Activated CD4-positive, alpha-beta T cell treated with anti-CD3 and anti-CD28 coated beads, Interleukin-2, amount 10 ng/mL, durations not matched to agents 24 days and 14 days (primary cell): ENCODE measurements at regions of chr21 and their contacts with region 1.

Region 1: DNA sequence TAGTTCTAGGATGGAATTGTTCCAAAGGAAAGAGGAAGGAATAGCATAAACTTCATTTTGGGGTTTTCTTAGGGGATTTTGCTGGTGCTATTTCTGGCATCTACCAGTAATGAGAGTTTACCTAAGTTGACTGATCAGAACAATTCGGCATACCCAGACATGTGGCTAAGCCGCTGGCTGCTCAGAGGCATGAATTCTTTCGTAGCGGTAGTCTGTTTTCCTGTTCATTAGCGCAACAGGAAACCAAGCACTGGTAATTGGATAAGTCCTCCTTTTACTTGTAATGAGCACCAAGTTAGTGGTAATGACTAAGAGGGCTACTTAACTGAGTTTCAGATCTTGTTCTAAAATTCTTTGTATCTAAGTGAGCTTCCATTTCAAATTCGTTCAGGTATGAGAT is 38.6 kb downstream of the C21orf91 start:
- DNase-seq: peak; percentile 78
- H3K4me3 Mint-ChIP-seq: peak overlapping the region; percentile 70
- H3K27ac Mint-ChIP-seq: peak overlapping the region; percentile 75
- H3K4me1 Mint-ChIP-seq: peaks cover 83% of the 10 kb centered on the region
- H3K27me3 Mint-ChIP-seq: no peaks in the 10 kb centered on the region

Region 2: DNA sequence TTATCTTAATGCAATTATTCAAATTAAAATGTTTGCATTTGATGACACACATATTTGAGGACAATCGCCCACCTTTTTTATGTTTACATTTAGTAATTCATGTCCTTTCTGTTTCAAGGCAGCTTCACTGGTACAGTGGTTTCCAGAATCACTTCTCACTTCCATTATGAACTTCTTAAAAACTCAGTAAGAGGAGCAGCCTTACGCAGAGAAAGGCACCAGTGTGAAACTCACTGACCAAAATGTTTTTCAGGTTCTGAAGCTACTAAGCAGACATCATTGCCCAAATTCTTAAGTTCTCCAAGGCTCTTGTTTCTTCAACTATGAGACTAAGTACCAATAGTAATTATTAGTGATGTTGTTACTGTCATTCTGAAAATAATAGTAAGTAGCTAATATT is 620.8 kb before region 1 on chr21:
- intact Hi-C with region 1: no loop called
- DNase-seq: no peak
- H3K4me3 Mint-ChIP-seq: no peak overlapping the region
- H3K27ac Mint-ChIP-seq: no peak overlapping the region
- H3K4me1 Mint-ChIP-seq: no peaks in the 10 kb centered on the region
- H3K27me3 Mint-ChIP-seq: no peaks in the 10 kb centered on the region

Region 3: GRCh38 chr21:17512253-17513213 is 268.0 kb before region 1 on chr21 and contains the start of gene CXADR:
- intact Hi-C with region 1: loop called (anchors 10 kb)
- DNase-seq: peak; percentile 92
- H3K4me3 Mint-ChIP-seq: peak within 1 kb of the TSS; percentile 87
- H3K27ac Mint-ChIP-seq: peak within 1 kb of the TSS; percentile 70
- H3K4me1 Mint-ChIP-seq: peaks cover 15% of the 10 kb centered on the region
- H3K27me3 Mint-ChIP-seq: peaks cover 53% of the 10 kb centered on the region
- total RNA-seq, gene CXADR: 0.16 and 0.33 TPM in 2 replicates

Region 4: DNA sequence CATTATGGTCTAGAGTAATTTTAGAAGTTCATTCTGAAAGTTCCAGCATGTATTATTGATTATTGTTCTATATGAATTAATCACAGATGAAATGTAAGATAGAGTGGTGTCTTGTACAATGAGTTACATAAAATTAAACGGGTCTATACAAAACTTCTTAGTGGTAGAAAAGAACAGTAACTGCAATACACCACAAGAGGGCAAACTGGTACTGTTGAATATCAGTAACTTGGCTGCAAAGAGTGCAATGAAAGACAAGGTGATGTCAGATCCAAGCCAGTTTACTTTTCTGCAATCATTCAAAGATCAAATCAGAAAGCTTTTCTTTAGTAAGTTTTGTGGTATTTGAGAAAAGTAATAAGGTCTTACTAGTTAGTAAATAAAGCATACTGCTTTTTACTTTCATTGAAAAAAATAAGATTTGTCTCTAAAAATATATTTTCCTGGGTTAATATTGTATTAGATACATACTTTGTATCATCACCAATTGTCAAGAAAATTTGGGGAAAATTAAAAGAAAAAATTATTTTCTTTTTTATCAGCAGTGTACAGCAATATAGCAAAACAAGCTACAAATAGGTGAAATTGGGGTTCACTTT is 101.4 kb before region 1 on chr21:
- intact Hi-C with region 1: no loop called
- DNase-seq: peak; percentile 78
- H3K4me3 Mint-ChIP-seq: no peak overlapping the region
- H3K27ac Mint-ChIP-seq: no peak overlapping the region
- H3K4me1 Mint-ChIP-seq: no peaks in the 10 kb centered on the region
- H3K27me3 Mint-ChIP-seq: peaks cover 4% of the 10 kb centered on the region

Region 5: DNA sequence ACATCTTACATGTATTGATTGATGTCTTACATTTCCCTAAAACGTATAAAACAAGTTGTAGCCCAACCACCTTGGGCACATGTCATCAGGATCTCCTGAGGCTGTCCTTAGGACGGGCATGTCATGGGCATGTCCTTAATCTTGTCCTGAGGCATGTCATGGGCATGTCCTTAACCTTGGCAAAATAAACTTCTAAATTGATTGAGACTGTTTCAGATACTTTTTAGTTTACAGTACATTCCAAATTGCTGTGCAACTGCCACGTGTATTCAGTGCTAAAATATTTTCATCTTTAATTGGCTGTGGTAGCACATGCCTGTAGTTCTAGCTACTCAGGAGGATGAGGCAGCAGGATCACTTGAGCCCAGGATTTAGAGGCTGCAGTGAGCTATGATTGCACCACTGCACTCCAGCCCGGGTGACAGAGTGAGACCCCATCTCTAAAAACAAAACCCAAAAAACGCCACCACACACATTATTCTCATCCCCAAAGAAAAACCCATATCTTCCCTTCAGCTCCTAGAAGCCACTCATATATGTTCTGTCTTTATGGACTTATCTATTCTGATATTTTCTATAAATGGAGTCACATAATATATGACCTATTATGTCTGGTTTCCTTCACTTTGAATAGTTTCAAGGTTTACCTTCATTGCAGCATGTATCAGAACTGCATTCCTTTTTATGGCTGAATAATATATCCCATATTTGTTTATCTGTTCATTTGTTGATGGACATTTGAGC is 71.8 kb before region 1 on chr21:
- intact Hi-C with region 1: loop called (anchors 2 kb)
- DNase-seq: no peak
- H3K4me3 Mint-ChIP-seq: no peak overlapping the region
- H3K27ac Mint-ChIP-seq: no peak overlapping the region
- H3K4me1 Mint-ChIP-seq: peaks cover 27% of the 10 kb centered on the region
- H3K27me3 Mint-ChIP-seq: peaks cover 6% of the 10 kb centered on the region

Region 6: GRCh38 chr21:17758657-17759056 is 21.9 kb before region 1 on chr21:
- intact Hi-C with region 1: no loop called
- DNase-seq: no peak
- H3K4me3 Mint-ChIP-seq: no peak overlapping the region
- H3K27ac Mint-ChIP-seq: no peak overlapping the region
- H3K4me1 Mint-ChIP-seq: no peaks in the 10 kb centered on the region
- H3K27me3 Mint-ChIP-seq: no peaks in the 10 kb centered on the region

Region 7: GRCh38 chr21:17768840-17769446 is 11.6 kb before region 1 on chr21:
- intact Hi-C with region 1: no loop called
- DNase-seq: no peak
- H3K4me3 Mint-ChIP-seq: no peak overlapping the region
- H3K27ac Mint-ChIP-seq: no peak overlapping the region
- H3K4me1 Mint-ChIP-seq: peaks cover 4% of the 10 kb centered on the region
- H3K27me3 Mint-ChIP-seq: no peaks in the 10 kb centered on the region

Region 8: DNA sequence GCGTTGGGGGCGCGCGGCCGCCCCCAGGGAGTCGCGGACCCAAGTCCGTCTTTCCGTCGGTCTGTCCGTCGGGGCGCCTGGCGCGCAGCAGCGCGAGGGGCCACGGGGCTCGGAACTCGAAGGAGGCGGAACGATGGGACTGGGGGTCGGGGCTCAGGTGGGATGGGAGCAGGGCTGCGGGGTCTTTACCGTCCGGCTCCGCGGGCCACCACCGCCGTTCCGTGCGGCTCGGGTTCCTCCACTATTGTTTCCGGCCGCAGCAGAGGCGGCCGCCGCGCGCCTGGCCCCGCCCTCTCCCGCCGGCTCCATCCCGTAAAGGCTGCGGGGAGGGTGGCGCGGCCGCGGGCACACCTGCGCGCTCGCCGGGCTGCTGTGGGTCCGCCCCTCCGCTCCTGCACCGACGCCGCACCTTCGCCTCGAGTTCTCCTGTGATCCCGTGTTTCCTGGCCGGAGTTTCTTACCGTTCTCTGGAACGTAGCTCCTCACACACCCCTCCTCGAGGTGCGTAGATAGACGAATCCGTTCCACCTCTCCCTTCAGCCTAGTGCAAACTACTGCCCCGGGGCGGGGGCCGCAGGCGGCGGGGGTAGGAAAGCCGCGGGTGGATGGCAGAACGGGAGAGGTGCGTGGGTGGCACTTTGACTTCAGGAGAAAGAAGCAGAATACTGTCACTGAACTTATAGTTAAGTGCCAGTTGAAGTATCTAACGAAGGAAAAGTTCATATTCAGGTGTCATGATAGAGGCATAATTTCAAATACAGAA is 38.8 kb after region 1 on chr21 and contains the start of gene C21orf91:
- intact Hi-C with region 1: loop called (anchors 1 kb)
- DNase-seq: peak; percentile 97
- H3K4me3 Mint-ChIP-seq: peak within 1 kb of the TSS; percentile 85
- H3K27ac Mint-ChIP-seq: peak within 1 kb of the TSS; percentile 100
- H3K4me1 Mint-ChIP-seq: peaks cover 36% of the 10 kb centered on the region
- H3K27me3 Mint-ChIP-seq: no peaks in the 10 kb centered on the region
- total RNA-seq, gene C21orf91: 37.0 and 39.6 TPM in 2 replicates

Region 9: GRCh38 chr21:18249672-18250071 is 469.1 kb after region 1 on chr21:
- intact Hi-C with region 1: loop called (anchors 10 kb)
- DNase-seq: peak; percentile 65
- H3K4me3 Mint-ChIP-seq: no peak overlapping the region
- H3K27ac Mint-ChIP-seq: no peak overlapping the region
- H3K4me1 Mint-ChIP-seq: no peaks in the 10 kb centered on the region
- H3K27me3 Mint-ChIP-seq: peaks cover 11% of the 10 kb centered on the region